Activated B cell treated with CpG ODN at 0.5 μM for 24 hours (primary cell): ENCODE measurements at regions of chr6 and their contacts with region 1.

Region 1: DNA sequence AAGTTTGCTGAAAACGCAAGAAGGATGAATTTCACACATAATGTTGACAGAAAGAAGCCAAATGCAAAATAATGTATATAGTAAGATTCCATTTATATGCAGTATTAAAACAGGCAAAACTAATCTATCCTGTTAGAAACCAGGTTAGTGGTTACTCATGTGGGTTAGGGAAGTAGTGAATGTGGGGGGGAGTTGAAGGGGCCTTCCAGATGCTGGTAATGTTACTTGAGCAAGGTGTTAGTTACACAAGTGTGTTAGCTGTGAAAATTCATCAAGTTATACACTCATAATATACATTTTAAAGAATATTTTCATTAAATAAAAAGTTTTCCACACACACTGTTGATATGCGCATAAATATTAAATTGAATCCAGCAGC is 29.8 kb downstream of the USP45 start:
- DNase-seq: no peak
- ATAC-seq: peak; percentile 26
- H3K4me3 Mint-ChIP-seq: peak overlapping the region; percentile 35
- H3K27ac Mint-ChIP-seq: peak overlapping the region; percentile 89
- H3K4me1 Mint-ChIP-seq: peaks cover 26% of the 10 kb centered on the region
- H3K27me3 Mint-ChIP-seq: no peaks in the 10 kb centered on the region
- CTCF ChIP-seq: no peak

Region 2: GRCh38 chr6:99364026-99364425 is 121.4 kb before region 1 on chr6:
- CTCF ChIA-PET with region 1: no interaction called
- POLR2A ChIA-PET with region 1: no interaction called
- intact Hi-C with region 1: no loop called
- DNase-seq: no peak
- ATAC-seq: no peak
- H3K4me3 Mint-ChIP-seq: no peak overlapping the region
- H3K27ac Mint-ChIP-seq: no peak overlapping the region
- H3K4me1 Mint-ChIP-seq: no peaks in the 10 kb centered on the region
- H3K27me3 Mint-ChIP-seq: peaks cover 20% of the 10 kb centered on the region
- CTCF ChIP-seq: no peak

Region 3: GRCh38 chr6:99434702-99435530 is 50.5 kb before region 1 on chr6:
- CTCF ChIA-PET with region 1: no interaction called
- POLR2A ChIA-PET with region 1: no interaction called
- intact Hi-C with region 1: no loop called
- DNase-seq: no peak
- ATAC-seq: peak; percentile 79
- H3K4me3 Mint-ChIP-seq: no peak overlapping the region
- H3K27ac Mint-ChIP-seq: no peak overlapping the region
- H3K4me1 Mint-ChIP-seq: peaks cover 3% of the 10 kb centered on the region
- H3K27me3 Mint-ChIP-seq: no peaks in the 10 kb centered on the region
- CTCF ChIP-seq: no peak

Region 4: GRCh38 chr6:99473730-99474129 is 11.7 kb before region 1 on chr6:
- CTCF ChIA-PET with region 1: no interaction called
- POLR2A ChIA-PET with region 1: no interaction called
- intact Hi-C with region 1: no loop called
- DNase-seq: no peak
- ATAC-seq: no peak
- H3K4me3 Mint-ChIP-seq: no peak overlapping the region
- H3K27ac Mint-ChIP-seq: no peak overlapping the region
- H3K4me1 Mint-ChIP-seq: no peaks in the 10 kb centered on the region
- H3K27me3 Mint-ChIP-seq: no peaks in the 10 kb centered on the region
- CTCF ChIP-seq: no peak

Region 5: DNA sequence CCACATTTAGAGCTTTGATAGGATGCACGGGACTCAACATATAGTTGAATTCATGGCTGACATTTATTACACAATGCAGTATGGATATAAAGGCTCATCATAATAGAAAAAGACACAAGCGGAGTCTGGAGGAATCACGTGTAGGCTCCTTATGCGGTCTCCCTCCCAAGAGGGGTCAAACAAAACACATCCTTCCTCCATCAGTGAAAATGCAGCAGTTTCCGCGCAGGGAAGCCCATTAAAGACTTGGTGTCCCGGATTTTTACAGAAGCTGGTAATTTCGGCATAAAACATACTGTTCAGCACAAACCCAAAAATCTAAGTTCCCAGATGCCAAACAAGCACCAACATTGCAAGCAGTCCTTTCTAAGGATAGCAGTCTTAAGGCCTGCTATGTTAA is 28.7 kb after region 1 on chr6:
- CTCF ChIA-PET with region 1: interaction called, 7 read pairs
- POLR2A ChIA-PET with region 1: interaction called, 59 read pairs
- intact Hi-C with region 1: loop called (anchors 1 kb)
- DNase-seq: no peak
- ATAC-seq: no peak
- H3K4me3 Mint-ChIP-seq: peak overlapping the region; percentile 89
- H3K27ac Mint-ChIP-seq: peak overlapping the region; percentile 84
- H3K4me1 Mint-ChIP-seq: peaks cover 34% of the 10 kb centered on the region
- H3K27me3 Mint-ChIP-seq: no peaks in the 10 kb centered on the region
- CTCF ChIP-seq: no peak

Region 6: GRCh38 chr6:99520855-99521632 is 35.7 kb after region 1 on chr6:
- CTCF ChIA-PET with region 1: no interaction called
- POLR2A ChIA-PET with region 1: interaction called, 59 read pairs
- intact Hi-C with region 1: loop called (anchors 1 kb)
- DNase-seq: peak; percentile 71
- ATAC-seq: peak; percentile 86
- H3K4me3 Mint-ChIP-seq: peak overlapping the region; percentile 99
- H3K27ac Mint-ChIP-seq: peak overlapping the region; percentile 97
- H3K4me1 Mint-ChIP-seq: peaks cover 41% of the 10 kb centered on the region
- H3K27me3 Mint-ChIP-seq: no peaks in the 10 kb centered on the region
- CTCF ChIP-seq: peak; percentile 33